Gastrocnemius medialis (tissue), 4 donors: ENCODE measurements at regions of chr6 and their contacts with region 1.

Region 1: GRCh38 chr6:149513915-149514314 is 29.1 kb upstream of the ZC3H12D start:
- DNase-seq: no peak
- ATAC-seq: no peak
- H3K4me3 ChIP-seq: no peak overlapping the region
- H3K27ac ChIP-seq: no peak overlapping the region
- H3K4me1 ChIP-seq: peaks cover 0 to 4% of the 10 kb centered on the region in 2 donors
- H3K27me3 ChIP-seq: no peaks in the 10 kb centered on the region
- CTCF ChIP-seq: no peak
- POLR2A ChIP-seq: no peak

Region 2: GRCh38 chr6:149028767-149029405 is 485.0 kb before region 1 on chr6:
- in situ Hi-C with region 1: loop called in 1 of 4 experiments (anchors 10 kb)
- intact Hi-C with region 1: loop called (anchors 2 kb)
- DNase-seq: peak in 1 of 2 donors; percentile 40
- ATAC-seq: peak; percentile 64 to 84
- H3K4me3 ChIP-seq: no peak overlapping the region
- H3K27ac ChIP-seq: no peak overlapping the region
- H3K4me1 ChIP-seq: peaks cover 0 to 6% of the 10 kb centered on the region in 2 donors
- H3K27me3 ChIP-seq: no peaks in the 10 kb centered on the region
- CTCF ChIP-seq: peak; percentile 69 to 81 (median 71)
- POLR2A ChIP-seq: no peak

Region 3: GRCh38 chr6:149082286-149082707 is 431.6 kb before region 1 on chr6:
- in situ Hi-C with region 1: no loop called
- intact Hi-C with region 1: loop called (anchors 5 kb)
- DNase-seq: peak; percentile 38 to 62
- ATAC-seq: peak; percentile 40 to 77
- H3K4me3 ChIP-seq: no peak overlapping the region
- H3K27ac ChIP-seq: no peak overlapping the region
- H3K4me1 ChIP-seq: no peaks in the 10 kb centered on the region
- H3K27me3 ChIP-seq: no peaks in the 10 kb centered on the region
- CTCF ChIP-seq: peak; percentile 49 to 76 (median 70)
- POLR2A ChIP-seq: no peak

Region 4: GRCh38 chr6:149438855-149439254 is 75.1 kb before region 1 on chr6:
- in situ Hi-C with region 1: no loop called
- intact Hi-C with region 1: loop called (anchors 5 kb)
- DNase-seq: no peak
- ATAC-seq: no peak
- H3K4me3 ChIP-seq: no peak overlapping the region
- H3K27ac ChIP-seq: no peak overlapping the region
- H3K4me1 ChIP-seq: no peaks in the 10 kb centered on the region
- H3K27me3 ChIP-seq: no peaks in the 10 kb centered on the region
- CTCF ChIP-seq: no peak
- POLR2A ChIP-seq: no peak

Region 5: DNA sequence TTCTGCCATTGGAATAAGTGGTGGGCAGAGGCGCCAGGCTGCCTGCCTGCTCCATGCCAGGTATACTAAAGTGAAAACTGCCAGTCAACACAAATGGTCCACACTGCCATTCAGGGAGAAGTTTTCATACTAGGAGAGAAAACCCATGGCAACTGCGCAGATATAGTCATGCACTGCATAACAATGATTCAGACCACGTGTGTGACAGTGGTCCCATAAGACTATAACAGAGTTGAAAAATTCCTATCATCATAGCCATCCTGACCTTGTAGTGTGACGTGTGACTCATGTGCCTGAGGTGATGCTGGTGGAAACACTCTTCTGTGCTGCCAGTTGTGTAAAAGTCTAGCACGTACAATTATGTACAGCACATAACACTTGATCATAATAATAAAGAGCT is 54.2 kb before region 1 on chr6:
- in situ Hi-C with region 1: no loop called
- intact Hi-C with region 1: loop called (anchors 5 kb)
- DNase-seq: no peak
- ATAC-seq: no peak
- H3K4me3 ChIP-seq: no peak overlapping the region
- H3K27ac ChIP-seq: no peak overlapping the region
- H3K4me1 ChIP-seq: peaks cover 7 to 12% of the 10 kb centered on the region in 2 donors
- H3K27me3 ChIP-seq: no peaks in the 10 kb centered on the region
- CTCF ChIP-seq: no peak
- POLR2A ChIP-seq: no peak